ENCODE measurements at regions of chr10 and their contacts with region 1.

Region 1: DNA sequence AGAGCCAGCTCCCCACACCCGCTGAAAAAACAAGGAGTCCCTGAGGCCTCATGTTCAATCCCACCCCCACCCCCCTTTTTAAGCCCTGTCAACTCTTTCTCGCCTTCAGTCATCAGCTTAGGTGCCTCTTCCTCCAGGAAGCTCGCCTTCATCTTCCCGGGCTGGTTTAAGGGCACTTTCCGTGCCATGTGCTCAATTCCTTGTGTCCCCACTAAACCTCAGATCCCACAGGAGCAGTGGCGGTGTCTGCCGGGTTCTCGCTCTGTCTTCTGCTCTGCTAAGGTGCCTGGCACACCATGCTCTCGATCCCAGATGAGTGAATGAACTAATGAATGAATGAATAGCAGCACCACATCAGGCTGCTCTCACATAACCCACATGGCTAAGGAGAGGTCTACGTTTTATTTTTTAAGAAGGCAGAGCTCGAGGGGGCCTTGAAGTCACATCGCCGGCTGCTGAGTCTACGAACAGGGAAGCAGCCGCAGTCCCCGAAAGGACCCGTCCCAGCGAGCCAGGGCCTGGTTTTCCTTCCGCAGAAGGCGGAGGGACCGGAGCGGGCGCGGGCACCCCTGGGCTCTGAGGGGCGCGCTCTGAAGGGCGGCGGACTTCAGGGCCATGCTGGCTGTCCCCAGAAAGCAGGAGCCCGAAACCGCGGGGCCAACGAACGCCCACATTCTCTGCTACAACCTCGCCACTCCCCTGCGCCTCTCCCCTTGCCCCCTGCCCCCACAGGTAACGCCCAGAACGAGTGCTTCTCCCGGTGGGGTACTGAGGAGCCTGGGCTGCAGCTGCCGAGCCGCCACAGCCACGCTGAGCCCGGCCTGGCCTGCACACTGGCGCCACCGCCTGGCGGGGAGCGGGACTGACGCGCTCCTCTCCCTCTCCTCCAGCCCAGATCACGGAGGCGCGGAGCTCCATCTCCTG is 73.4 kb upstream of the KCNMA1 start:
- DNase-seq: peak; percentile 90
- ATAC-seq: peak; percentile 85
- H3K4me3 Mint-ChIP-seq: peak overlapping the region; percentile 64
- H3K27ac Mint-ChIP-seq: no peak overlapping the region
- H3K4me1 Mint-ChIP-seq: peaks cover 35% of the 10 kb centered on the region
- H3K27me3 Mint-ChIP-seq: peaks cover 29% of the 10 kb centered on the region
- CTCF ChIP-seq: peak; percentile 96

Region 2: DNA sequence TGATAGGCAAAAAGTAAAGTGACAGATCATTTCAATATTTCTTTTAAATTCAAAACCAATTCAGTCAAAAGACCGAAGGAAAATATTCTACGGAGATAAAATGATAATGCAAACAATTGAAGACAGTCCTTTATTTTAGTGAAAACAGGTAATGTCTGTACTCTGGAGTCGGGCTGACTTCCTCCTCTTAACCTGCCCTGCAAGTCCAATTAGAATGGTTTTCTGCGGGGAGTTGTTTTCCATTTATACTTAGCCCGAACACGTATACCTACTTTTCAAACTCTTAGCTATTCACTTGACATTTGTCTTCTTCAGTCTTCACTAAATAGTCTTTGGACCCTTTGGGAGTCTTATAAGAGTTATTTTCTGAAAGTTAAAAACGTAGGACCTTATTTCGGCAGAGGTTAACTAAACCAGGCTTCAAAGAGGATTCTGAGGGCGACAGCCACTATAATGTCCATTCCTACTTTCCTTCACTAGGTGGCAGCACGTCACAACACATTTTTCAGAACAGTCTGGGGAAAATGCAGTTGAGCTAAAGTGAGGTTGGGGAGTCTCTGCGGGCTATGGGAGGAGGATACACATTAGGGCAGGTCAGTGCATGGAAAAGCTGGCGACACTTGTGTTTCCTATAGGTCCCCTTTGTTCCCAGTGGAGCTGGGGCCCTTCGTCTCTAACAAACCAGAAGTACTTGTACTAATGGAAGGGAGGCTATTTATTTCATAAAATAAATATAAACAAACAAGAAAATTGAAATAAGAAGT is 545.4 kb before region 1 on chr10:
- CTCF ChIA-PET with region 1: interaction called, 20 read pairs
- POLR2A ChIA-PET with region 1: no interaction called
- DNase-seq: peak; percentile 59
- ATAC-seq: peak; percentile 99
- H3K4me3 Mint-ChIP-seq: peak overlapping the region; percentile 19; the same call in 1 of the 2 replicates
- H3K27ac Mint-ChIP-seq: 0 out of 2 replicates have a peak overlapping the region, but pooled peaks have one; percentile 66
- H3K4me1 Mint-ChIP-seq: peaks cover 5% of the 10 kb centered on the region
- H3K27me3 Mint-ChIP-seq: no peaks in the 10 kb centered on the region
- CTCF ChIP-seq: 0 out of 2 replicates have a peak, but pooled peaks have one; percentile 52

Region 3: DNA sequence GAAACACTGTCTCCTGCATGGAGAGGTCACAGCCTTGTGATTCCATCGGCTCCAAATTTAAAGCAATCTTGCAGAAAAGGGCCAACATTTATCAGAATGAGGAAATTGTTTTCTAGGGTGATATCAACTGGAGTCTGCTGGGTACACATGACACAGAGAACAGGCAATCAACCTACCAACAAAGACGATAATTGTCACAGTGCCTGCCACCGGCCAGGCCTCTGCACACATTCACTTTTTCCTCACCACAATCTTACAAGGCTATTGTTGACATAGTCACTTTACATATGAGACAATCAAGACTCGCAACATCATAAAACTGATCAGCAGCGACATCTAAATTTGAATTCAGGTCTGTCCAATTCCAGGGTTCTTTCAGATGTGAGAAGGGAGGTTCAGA is 262.8 kb before region 1 on chr10:
- CTCF ChIA-PET with region 1: interaction called, 10 read pairs
- POLR2A ChIA-PET with region 1: no interaction called
- DNase-seq: no peak
- ATAC-seq: no peak
- H3K4me3 Mint-ChIP-seq: no peak overlapping the region
- H3K27ac Mint-ChIP-seq: no peak overlapping the region
- H3K4me1 Mint-ChIP-seq: peaks cover 15% of the 10 kb centered on the region
- H3K27me3 Mint-ChIP-seq: no peaks in the 10 kb centered on the region
- CTCF ChIP-seq: no peak

Region 4: GRCh38 chr10:77544617-77545016 is 166.4 kb before region 1 on chr10:
- CTCF ChIA-PET with region 1: no interaction called
- POLR2A ChIA-PET with region 1: no interaction called
- DNase-seq: no peak
- ATAC-seq: no peak
- H3K4me3 Mint-ChIP-seq: no peak overlapping the region
- H3K27ac Mint-ChIP-seq: no peak overlapping the region
- H3K4me1 Mint-ChIP-seq: peaks cover 4% of the 10 kb centered on the region
- H3K27me3 Mint-ChIP-seq: no peaks in the 10 kb centered on the region
- CTCF ChIP-seq: no peak

Region 5: GRCh38 chr10:77671594-77672252 is 39.3 kb before region 1 on chr10:
- CTCF ChIA-PET with region 1: interaction called, 17 read pairs
- POLR2A ChIA-PET with region 1: no interaction called
- DNase-seq: no peak
- ATAC-seq: no peak
- H3K4me3 Mint-ChIP-seq: no peak overlapping the region
- H3K27ac Mint-ChIP-seq: no peak overlapping the region
- H3K4me1 Mint-ChIP-seq: peaks cover 16% of the 10 kb centered on the region
- H3K27me3 Mint-ChIP-seq: peaks cover 6% of the 10 kb centered on the region
- CTCF ChIP-seq: no peak

Region 6: DNA sequence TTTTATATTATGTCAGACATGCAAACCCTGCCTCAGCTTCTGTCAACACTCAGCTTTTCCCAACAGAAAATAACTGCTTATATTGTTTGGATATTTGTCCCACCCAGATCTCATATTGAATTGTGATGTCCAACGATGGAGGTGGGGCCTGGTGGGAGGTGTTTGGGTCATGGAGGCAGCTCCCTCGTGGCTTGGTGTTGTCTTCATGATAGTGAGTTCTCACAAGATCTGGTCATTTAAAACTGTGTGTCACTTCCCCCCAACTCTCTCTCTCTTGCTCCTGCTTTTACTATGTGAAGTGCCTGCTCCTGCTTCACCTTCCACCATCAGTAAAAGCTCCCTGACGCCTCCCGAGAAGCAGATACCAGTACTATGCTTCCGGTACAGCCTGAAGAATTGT is 12.4 kb after region 1 on chr10:
- CTCF ChIA-PET with region 1: interaction called, 16 read pairs
- POLR2A ChIA-PET with region 1: no interaction called
- DNase-seq: no peak
- ATAC-seq: no peak
- H3K4me3 Mint-ChIP-seq: no peak overlapping the region
- H3K27ac Mint-ChIP-seq: no peak overlapping the region
- H3K4me1 Mint-ChIP-seq: 0 out of 2 replicates have a peak, but pooled peaks cover 2% of the 10 kb centered on the region
- H3K27me3 Mint-ChIP-seq: no peaks in the 10 kb centered on the region
- CTCF ChIP-seq: no peak

Region 7: GRCh38 chr10:77837240-77837924 is 126.4 kb after region 1 on chr10:
- CTCF ChIA-PET with region 1: interaction called, 11 read pairs
- POLR2A ChIA-PET with region 1: no interaction called
- DNase-seq: peak; percentile 82
- ATAC-seq: peak; percentile 96
- H3K4me3 Mint-ChIP-seq: no peak overlapping the region
- H3K27ac Mint-ChIP-seq: peak overlapping the region; percentile 95; the same call in 1 of the 2 replicates
- H3K4me1 Mint-ChIP-seq: peaks cover 26% of the 10 kb centered on the region
- H3K27me3 Mint-ChIP-seq: no peaks in the 10 kb centered on the region
- CTCF ChIP-seq: no peak

Region 8: GRCh38 chr10:77965294-77965693 is 254.3 kb after region 1 on chr10:
- CTCF ChIA-PET with region 1: no interaction called
- POLR2A ChIA-PET with region 1: no interaction called
- DNase-seq: no peak
- ATAC-seq: no peak
- H3K4me3 Mint-ChIP-seq: no peak overlapping the region
- H3K27ac Mint-ChIP-seq: no peak overlapping the region
- H3K4me1 Mint-ChIP-seq: peaks cover 6% of the 10 kb centered on the region
- H3K27me3 Mint-ChIP-seq: no peaks in the 10 kb centered on the region; the same call in 1 of the 2 replicates
- CTCF ChIP-seq: no peak

Measured in WTC11 (cell line).